ENCODE measurements at regions of chr21 and their contacts with region 1.

Region 1: GRCh38 chr21:32306021-32306780 is 7.5 kb downstream of the MRAP start:
- DNase-seq: peak in 1 of 2 donors; percentile 35
- ATAC-seq: peak in 7 of 8 donors; percentile 40 to 73 (median 53)
- H3K4me3 ChIP-seq: peak overlapping the region in 1 of 10 donors; percentile 11
- H3K27ac ChIP-seq: peak overlapping the region in 1 of 10 donors; percentile 4
- H3K4me1 ChIP-seq: peaks cover 0 to 7% (median 0%) of the 10 kb centered on the region in 9 donors
- H3K27me3 ChIP-seq: no peaks in the 10 kb centered on the region
- CTCF ChIP-seq: peak in 6 of 9 donors; percentile 33 to 62 (median 38)

Region 2: GRCh38 chr21:32257962-32258785 is 48.0 kb before region 1 on chr21:
- intact Hi-C with region 1: no loop called
- DNase-seq: peak; percentile 43 to 67
- ATAC-seq: peak; percentile 75 to 85 (median 81)
- H3K4me3 ChIP-seq: no peak overlapping the region
- H3K27ac ChIP-seq: no peak overlapping the region
- H3K4me1 ChIP-seq: peaks cover 7 to 33% (median 17%) of the 10 kb centered on the region in 9 donors
- H3K27me3 ChIP-seq: no peaks in the 10 kb centered on the region
- CTCF ChIP-seq: peak; percentile 42 to 84 (median 72)

Region 3: DNA sequence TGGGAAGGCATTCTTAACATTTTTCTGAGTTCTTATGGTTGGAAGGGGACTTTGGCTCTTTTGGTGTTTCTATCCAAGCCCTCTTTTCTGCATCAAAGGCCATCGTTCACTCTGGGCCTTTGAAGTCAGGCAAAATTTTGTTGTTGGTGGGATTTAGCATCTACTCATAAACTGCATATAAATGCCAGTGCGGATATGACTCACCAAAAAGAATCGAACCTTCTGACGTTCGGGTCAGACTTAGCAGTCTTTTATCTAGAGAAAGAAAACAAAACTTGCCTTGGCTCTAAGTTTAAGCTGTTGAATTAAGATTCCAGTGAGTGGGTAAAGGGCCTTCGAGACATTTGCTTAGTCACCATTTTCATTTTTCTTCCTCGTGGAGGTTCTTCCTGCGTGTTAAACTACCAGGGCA is 157.7 kb after region 1 on chr21:
- intact Hi-C with region 1: loop called in 1 of 10 experiments (anchors 5 kb)
- DNase-seq: no peak
- ATAC-seq: peak in 6 of 8 donors; percentile 32 to 61 (median 40)
- H3K4me3 ChIP-seq: no peak overlapping the region
- H3K27ac ChIP-seq: peak overlapping the region in 7 of 10 donors; percentile 20 to 67 (median 48)
- H3K4me1 ChIP-seq: peaks cover 0 to 15% (median 0%) of the 10 kb centered on the region in 9 donors
- H3K27me3 ChIP-seq: no peaks in the 10 kb centered on the region
- CTCF ChIP-seq: no peak

Measured in heart right ventricle (tissue), 16 donors.